Activated CD8-positive, alpha-beta T cell treated with anti-CD3 and anti-CD28 coated beads for 36 hours (primary cell): ENCODE measurements at regions of chr6 and their contacts with region 1.

Region 1: GRCh38 chr6:157034436-157035230 is 257.5 kb downstream of the ARID1B start:
- DNase-seq: no peak
- ATAC-seq: peak; percentile 82
- H3K4me3 Mint-ChIP-seq: peak overlapping the region; percentile 55
- H3K27ac Mint-ChIP-seq: peak overlapping the region; percentile 64
- H3K4me1 Mint-ChIP-seq: peaks cover 23% of the 10 kb centered on the region
- H3K27me3 Mint-ChIP-seq: no peaks in the 10 kb centered on the region
- CTCF ChIP-seq: peak; percentile 75

Region 2: GRCh38 chr6:156942266-156942665 is 92.4 kb before region 1 on chr6:
- CTCF ChIA-PET with region 1: no interaction called
- POLR2A ChIA-PET with region 1: no interaction called
- intact Hi-C with region 1: no loop called
- DNase-seq: no peak
- ATAC-seq: peak; percentile 39
- H3K4me3 Mint-ChIP-seq: no peak overlapping the region
- H3K27ac Mint-ChIP-seq: no peak overlapping the region
- H3K4me1 Mint-ChIP-seq: peaks cover 62% of the 10 kb centered on the region
- H3K27me3 Mint-ChIP-seq: no peaks in the 10 kb centered on the region
- CTCF ChIP-seq: no peak

Region 3: DNA sequence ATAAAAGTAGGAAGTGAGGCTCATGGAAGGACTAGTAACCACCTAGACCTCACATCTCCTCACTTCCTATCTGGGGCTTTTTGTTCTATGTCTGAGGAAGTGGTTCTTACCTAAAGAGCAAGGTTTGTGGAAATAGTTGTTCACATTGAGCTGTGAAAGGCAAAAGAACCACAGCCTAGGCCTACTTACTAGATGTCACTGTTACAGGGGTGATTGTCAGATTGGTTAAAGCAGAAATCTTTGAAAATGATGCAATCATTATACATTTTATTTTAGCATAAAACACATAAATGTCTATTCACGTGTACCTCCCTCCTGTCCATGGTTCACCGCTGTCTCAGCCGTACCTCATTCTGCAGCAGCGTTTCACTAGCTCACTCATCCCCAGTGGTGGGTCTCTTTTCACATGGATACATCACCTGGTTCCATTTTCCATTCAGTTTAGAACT is 19.9 kb after region 1 on chr6:
- CTCF ChIA-PET with region 1: interaction called, 12 read pairs
- POLR2A ChIA-PET with region 1: no interaction called
- intact Hi-C with region 1: no loop called
- DNase-seq: peak; percentile 72
- ATAC-seq: peak; percentile 86
- H3K4me3 Mint-ChIP-seq: peak overlapping the region; percentile 61
- H3K27ac Mint-ChIP-seq: peak overlapping the region; percentile 98
- H3K4me1 Mint-ChIP-seq: peaks cover 42% of the 10 kb centered on the region
- H3K27me3 Mint-ChIP-seq: no peaks in the 10 kb centered on the region
- CTCF ChIP-seq: no peak

Region 4: GRCh38 chr6:157107915-157108651 is 73.5 kb after region 1 on chr6:
- CTCF ChIA-PET with region 1: interaction called, 12 read pairs
- POLR2A ChIA-PET with region 1: no interaction called
- intact Hi-C with region 1: no loop called
- DNase-seq: peak; percentile 26
- ATAC-seq: peak; percentile 90
- H3K4me3 Mint-ChIP-seq: no peak overlapping the region
- H3K27ac Mint-ChIP-seq: peak overlapping the region; percentile 67
- H3K4me1 Mint-ChIP-seq: peaks cover 27% of the 10 kb centered on the region
- H3K27me3 Mint-ChIP-seq: no peaks in the 10 kb centered on the region
- CTCF ChIP-seq: no peak

Region 5: DNA sequence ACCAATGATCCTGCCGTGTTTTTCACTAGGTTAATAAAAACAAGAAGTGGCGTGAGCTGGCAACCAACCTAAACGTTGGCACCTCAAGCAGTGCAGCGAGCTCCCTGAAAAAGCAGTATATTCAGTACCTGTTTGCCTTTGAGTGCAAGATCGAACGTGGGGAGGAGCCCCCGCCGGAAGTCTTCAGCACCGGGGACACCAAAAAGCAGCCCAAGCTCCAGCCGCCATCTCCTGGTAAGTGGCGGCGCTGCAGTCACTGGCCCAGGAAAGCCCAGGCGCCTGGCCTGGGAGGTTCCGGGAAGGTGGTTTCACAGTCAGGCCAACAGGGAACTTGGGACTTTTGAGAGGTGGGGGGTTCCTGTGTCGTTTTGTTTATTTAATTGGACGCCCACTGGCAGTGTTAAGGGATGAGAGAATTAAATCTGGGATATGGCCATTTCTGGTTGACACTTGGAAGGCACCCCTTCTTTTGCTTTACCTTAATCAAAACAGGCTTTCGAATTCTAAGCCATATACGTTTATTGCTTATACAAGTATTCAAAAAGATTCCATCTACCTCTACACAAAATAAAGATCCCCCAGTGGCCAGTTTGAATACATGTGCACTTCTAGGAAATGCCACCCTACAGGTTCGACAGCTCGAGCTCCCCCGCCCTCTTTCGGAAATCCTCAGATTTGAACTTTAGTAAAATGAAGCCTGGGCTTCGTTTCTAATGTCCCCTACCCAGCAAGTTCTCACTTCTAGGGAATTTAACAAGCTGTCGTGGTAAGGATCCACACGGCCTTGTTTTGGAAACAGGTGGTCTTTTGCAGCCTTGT is 149.8 kb after region 1 on chr6:
- CTCF ChIA-PET with region 1: interaction called, 39 read pairs
- POLR2A ChIA-PET with region 1: interaction called, 3 read pairs
- intact Hi-C with region 1: loop called (anchors 1 kb)
- DNase-seq: peak; percentile 75
- ATAC-seq: peak; percentile 90
- H3K4me3 Mint-ChIP-seq: no peak overlapping the region
- H3K27ac Mint-ChIP-seq: no peak overlapping the region
- H3K4me1 Mint-ChIP-seq: peaks cover 6% of the 10 kb centered on the region
- H3K27me3 Mint-ChIP-seq: no peaks in the 10 kb centered on the region
- CTCF ChIP-seq: peak; percentile 94